ENCODE measurements at regions of chr10 and their contacts with region 1.

Region 1: GRCh38 chr10:71708301-71708703 is 11.3 kb downstream of the C10orf105 start:
- DNase-seq: peak; percentile 81
- ATAC-seq: peak; percentile 71
- H3K4me3 ChIP-seq: no peak overlapping the region
- H3K27ac ChIP-seq: no peak overlapping the region
- H3K4me1 ChIP-seq: peaks cover 17% of the 10 kb centered on the region
- H3K27me3 ChIP-seq: no peaks in the 10 kb centered on the region
- CTCF ChIP-seq: peak; percentile 90

Region 2: GRCh38 chr10:71319042-71319799 is 389.1 kb before region 1 on chr10 and contains the start of gene SLC29A3:
- intact Hi-C with region 1: loop called (anchors 10 kb)
- DNase-seq: peak; percentile 92
- ATAC-seq: peak; percentile 91
- H3K4me3 ChIP-seq: peak within 1 kb of the TSS; percentile 88
- H3K27ac ChIP-seq: peak within 1 kb of the TSS; percentile 78
- H3K4me1 ChIP-seq: peaks cover 17% of the 10 kb centered on the region
- H3K27me3 ChIP-seq: no peaks in the 10 kb centered on the region
- CTCF ChIP-seq: peak; percentile 61
- total RNA-seq, gene SLC29A3: 14.8 TPM

Region 3: DNA sequence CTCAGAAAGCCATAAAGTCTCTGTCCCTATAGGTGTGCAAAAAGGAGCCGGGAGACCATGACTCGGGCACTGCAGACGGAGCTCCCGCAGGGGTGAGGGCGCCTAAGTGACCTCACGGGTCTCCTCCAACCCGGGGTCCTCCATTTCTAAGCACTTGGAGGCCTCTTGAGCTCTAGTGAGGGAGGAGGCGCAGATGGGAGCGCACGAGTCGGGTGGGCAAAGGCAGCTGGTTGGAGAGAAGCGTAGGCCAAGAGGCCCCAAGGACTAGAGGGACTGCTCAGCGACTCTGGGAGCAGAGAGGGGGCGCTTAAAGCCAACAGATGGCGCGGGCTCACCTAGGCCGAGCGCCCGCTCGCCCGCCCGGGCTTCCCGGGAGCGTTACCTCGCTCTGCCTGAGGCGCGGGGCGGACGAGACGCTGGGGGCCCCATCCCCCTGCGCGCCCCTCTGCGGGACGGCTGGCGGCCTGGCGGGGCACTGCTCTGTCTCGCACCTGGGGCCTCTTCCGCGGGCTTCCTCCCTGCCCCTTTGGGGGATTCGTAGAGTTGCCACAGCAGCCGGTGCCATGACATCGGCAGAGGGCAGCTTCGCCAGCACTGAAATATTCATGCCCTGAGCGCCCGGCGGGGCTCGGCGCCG is 312.1 kb before region 1 on chr10:
- intact Hi-C with region 1: loop called (anchors 10 kb)
- DNase-seq: peak; percentile 68
- ATAC-seq: peak; percentile 60
- H3K4me3 ChIP-seq: peak overlapping the region; percentile 50
- H3K27ac ChIP-seq: no peak overlapping the region
- H3K4me1 ChIP-seq: peaks cover 10% of the 10 kb centered on the region
- H3K27me3 ChIP-seq: peaks cover 42% of the 10 kb centered on the region
- CTCF ChIP-seq: peak; percentile 47

Region 4: GRCh38 chr10:71766702-71767419 is 58.6 kb after region 1 on chr10:
- intact Hi-C with region 1: no loop called
- DNase-seq: peak; percentile 82
- ATAC-seq: peak; percentile 74
- H3K4me3 ChIP-seq: no peak overlapping the region
- H3K27ac ChIP-seq: peak overlapping the region; percentile 90
- H3K4me1 ChIP-seq: peaks cover 93% of the 10 kb centered on the region
- H3K27me3 ChIP-seq: no peaks in the 10 kb centered on the region
- CTCF ChIP-seq: no peak

Region 5: DNA sequence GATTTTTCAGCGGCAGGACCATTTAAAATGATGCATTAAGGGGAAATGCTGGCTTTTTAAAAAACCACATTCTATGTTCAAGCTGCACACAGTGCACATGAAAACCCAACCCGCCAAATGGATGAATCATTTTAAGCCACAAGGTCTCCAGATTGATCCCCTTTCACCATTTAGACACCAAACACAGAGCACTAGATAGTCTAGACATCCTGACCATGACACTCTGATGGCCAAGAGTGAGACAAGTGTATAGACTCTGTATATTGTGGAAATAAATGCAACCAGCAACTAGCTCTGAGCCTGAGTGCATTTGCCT is 114.1 kb after region 1 on chr10:
- intact Hi-C with region 1: no loop called
- DNase-seq: no peak
- ATAC-seq: no peak
- H3K4me3 ChIP-seq: no peak overlapping the region
- H3K27ac ChIP-seq: no peak overlapping the region
- H3K4me1 ChIP-seq: peaks cover 6% of the 10 kb centered on the region
- H3K27me3 ChIP-seq: no peaks in the 10 kb centered on the region
- CTCF ChIP-seq: no peak